Naive thymus-derived CD4-positive, alpha-beta T cell (primary cell): ENCODE measurements at regions of chr7 and their contacts with region 1.

Region 1: DNA sequence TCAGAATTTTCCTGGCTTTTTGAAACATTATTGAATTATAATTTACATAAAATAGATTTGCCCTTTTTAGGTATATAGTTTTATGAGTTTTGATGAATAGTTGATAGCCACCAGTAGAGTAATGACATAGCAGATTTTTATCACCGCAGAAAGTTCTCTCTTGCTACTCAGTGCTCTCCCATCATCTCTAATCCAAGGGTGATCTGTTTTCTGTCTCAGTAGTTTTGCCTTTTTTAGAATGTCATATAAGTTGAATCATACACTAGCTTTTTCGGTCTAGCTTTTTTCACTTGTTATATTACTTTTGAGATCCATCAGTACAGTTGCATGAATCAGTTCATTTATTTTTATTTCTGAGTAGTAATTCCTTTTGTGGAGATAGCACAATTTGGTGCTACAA is 17.9 kb downstream of the RSBN1L start:
- DNase-seq: no peak
- ATAC-seq: no peak
- H3K4me3 ChIP-seq: no peak overlapping the region
- H3K4me3 Mint-ChIP-seq: peak overlapping the region in 2 of 10 donors; percentile 0 to 3
- H3K27ac ChIP-seq: no peak overlapping the region
- H3K27ac Mint-ChIP-seq: peak overlapping the region in 2 of 9 donors; percentile 19 to 41
- H3K4me1 ChIP-seq: peaks cover 0 to 9% of the 10 kb centered on the region in 2 donors
- H3K4me1 Mint-ChIP-seq: peaks cover 26 to 90% (median 71%) of the 10 kb centered on the region in 7 donors
- H3K27me3 ChIP-seq: no peaks in the 10 kb centered on the region
- H3K27me3 Mint-ChIP-seq: no peaks in the 10 kb centered on the region

Region 2: DNA sequence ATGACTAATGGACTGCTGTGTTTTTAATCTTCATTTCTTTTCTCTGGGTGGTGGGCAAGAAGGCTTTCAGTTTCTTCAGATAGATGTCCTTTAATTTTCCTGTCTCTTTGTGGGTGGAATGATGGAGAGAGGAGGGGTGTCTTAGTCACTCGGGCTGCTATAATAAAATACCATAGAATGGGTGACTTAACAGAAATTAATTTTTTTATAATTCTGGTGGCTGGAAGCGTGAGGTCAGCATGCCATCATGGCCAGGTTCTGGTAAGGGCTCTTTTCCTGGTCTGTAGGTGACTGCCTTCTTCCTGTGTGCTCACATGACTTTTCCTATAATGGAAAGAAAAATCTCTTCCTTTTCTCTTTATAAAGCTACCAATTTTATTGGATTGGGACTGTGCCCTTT is 11.7 kb before region 1 on chr7:
- CTCF ChIA-PET with region 1: interaction called, 3 read pairs
- POLR2A ChIA-PET with region 1: no interaction called
- intact Hi-C with region 1: loop called in 1 of 2 experiments (anchors 1 kb)
- DNase-seq: no peak
- ATAC-seq: no peak
- H3K4me3 ChIP-seq: no peak overlapping the region
- H3K4me3 Mint-ChIP-seq: peak overlapping the region in 9 of 10 donors; percentile 16 to 76 (median 43)
- H3K27ac ChIP-seq: no peak overlapping the region
- H3K27ac Mint-ChIP-seq: peak overlapping the region in 3 of 9 donors; percentile 7 to 86 (median 9)
- H3K4me1 ChIP-seq: peaks cover 15 to 36% of the 10 kb centered on the region in 2 donors
- H3K4me1 Mint-ChIP-seq: peaks cover 34 to 88% (median 62%) of the 10 kb centered on the region in 7 donors
- H3K27me3 ChIP-seq: no peaks in the 10 kb centered on the region
- H3K27me3 Mint-ChIP-seq: no peaks in the 10 kb centered on the region

Region 3: GRCh38 chr7:77727936-77728701 is 13.9 kb after region 1 on chr7:
- CTCF ChIA-PET with region 1: interaction called, 6 read pairs
- POLR2A ChIA-PET with region 1: no interaction called
- intact Hi-C with region 1: loop called in 1 of 2 experiments (anchors 2 kb)
- DNase-seq: peak in 7 of 9 donors; percentile 13 to 56 (median 31)
- ATAC-seq: peak; percentile 86
- H3K4me3 ChIP-seq: no peak overlapping the region
- H3K4me3 Mint-ChIP-seq: peak overlapping the region; percentile 2 to 85 (median 59)
- H3K27ac ChIP-seq: peak overlapping the region; percentile 53
- H3K27ac Mint-ChIP-seq: peak overlapping the region in 8 of 9 donors; percentile 52 to 96 (median 74)
- H3K4me1 ChIP-seq: peaks cover 13 to 20% of the 10 kb centered on the region in 2 donors
- H3K4me1 Mint-ChIP-seq: peaks cover 17 to 74% (median 66%) of the 10 kb centered on the region in 7 donors
- H3K27me3 ChIP-seq: no peaks in the 10 kb centered on the region
- H3K27me3 Mint-ChIP-seq: no peaks in the 10 kb centered on the region